ENCODE measurements at regions of chr5 and their contacts with region 1.

Region 1: DNA sequence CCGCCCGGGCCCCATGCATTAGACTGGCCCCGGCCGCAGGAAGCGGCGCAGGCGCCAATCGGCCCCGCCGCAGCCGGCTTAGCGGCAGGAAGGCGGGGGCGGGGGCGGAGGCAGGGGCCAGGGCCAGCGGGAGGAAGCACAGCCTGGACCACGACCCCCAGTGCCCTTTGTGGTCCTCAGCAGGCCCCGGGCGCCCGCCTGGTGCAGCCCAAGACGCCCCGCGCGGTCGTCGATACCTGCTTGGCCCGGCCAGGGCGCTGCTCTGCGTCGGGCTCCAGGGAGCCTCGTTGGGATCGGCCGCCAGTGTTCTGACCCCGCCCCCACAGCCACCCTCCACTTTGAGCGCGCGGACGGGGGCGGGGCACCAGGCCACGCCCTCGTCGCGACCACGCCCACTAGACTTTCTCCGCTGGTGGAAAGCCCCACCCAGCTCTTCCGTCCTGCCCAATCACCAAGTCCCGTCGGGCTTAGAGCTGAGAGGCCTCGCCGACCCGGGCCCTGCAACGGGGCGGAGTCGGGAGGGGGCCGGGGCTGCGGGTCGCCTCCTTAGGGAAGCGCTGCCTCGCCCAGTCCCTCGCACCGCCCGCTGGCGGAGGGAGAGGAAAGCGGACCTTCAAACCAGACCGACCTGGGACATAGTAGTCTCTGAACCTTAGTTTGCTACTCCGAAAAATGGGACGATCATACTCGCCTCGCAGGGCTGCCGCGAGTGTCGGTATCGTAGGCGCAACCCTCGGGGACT is at the start of gene PDLIM7:
- DNase-seq: no peak
- ATAC-seq: peak; percentile 89
- H3K4me3 ChIP-seq: peak within 1 kb of the TSS; percentile 56 to 63
- H3K27ac ChIP-seq: peak within 1 kb of the TSS; percentile 70
- H3K4me1 ChIP-seq: peaks cover 30% of the 10 kb centered on the region
- H3K27me3 ChIP-seq: no peaks in the 10 kb centered on the region
- CTCF ChIP-seq: peak; percentile 6; the same call in 1 of the 2 replicates
- total RNA-seq, gene PDLIM7: 62.9 TPM

Region 2: DNA sequence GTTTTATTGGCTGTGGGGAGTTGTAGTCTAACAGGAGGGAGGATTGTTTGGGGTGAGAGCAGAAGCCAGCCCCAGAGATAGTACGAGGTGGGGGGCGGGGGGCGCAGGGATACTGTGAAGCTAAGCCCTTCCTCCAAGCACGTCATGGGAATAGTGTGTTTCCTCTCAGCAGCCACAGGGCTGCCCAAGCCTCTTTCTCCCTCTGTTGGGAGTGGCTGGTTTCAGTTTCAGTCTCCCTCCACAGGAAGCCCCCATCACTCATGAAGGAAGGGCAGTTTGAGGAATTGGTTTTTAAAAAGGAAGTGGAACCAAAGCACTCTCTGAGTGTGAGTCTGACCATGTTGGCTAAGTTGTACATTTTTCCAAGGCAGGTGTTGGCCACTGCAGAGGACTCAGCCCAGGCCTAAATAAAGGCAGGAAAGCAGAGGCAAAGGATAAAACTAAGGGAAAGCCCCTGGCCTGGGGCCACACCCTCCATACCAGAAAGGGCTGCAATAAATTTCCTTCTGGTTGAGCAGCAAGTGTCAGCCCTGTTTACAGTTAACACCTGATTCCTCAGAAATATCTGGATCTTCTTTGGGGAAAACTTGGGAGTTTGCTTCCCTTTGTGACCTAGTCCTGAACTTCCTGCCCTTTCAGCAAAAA is 197.1 kb before region 1 on chr5:
- CTCF ChIA-PET with region 1: no interaction called
- POLR2A ChIA-PET with region 1: no interaction called
- in situ Hi-C with region 1: no loop called
- intact Hi-C with region 1: no loop called
- DNase-seq: no peak
- ATAC-seq: no peak
- H3K4me3 ChIP-seq: no peak overlapping the region
- H3K27ac ChIP-seq: peak overlapping the region; percentile 30; the same call in 1 of the 2 replicates
- H3K4me1 ChIP-seq: peaks cover 31% of the 10 kb centered on the region
- H3K27me3 ChIP-seq: no peaks in the 10 kb centered on the region
- CTCF ChIP-seq: no peak

Region 3: DNA sequence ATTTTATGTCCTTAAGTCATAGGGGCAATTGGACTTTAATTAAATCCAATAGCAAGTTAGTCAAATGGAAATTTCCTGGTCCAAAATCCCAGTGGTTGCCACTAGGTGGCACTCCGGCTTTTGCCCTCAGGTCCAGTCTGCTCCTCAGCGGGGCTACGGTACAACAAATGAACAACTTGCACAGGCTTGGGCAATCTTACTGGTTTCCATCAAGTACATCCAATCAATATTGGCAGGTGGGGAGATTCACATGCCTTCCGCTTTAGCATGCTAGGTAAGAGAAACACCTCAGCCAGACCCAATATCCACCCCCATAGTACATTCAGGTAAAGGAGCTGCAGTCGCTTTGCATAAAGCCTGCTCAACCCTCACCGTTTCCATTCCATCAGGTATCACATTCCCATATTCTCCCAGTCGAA is 179.5 kb before region 1 on chr5:
- CTCF ChIA-PET with region 1: no interaction called
- POLR2A ChIA-PET with region 1: no interaction called
- in situ Hi-C with region 1: no loop called
- intact Hi-C with region 1: no loop called
- DNase-seq: peak; percentile 65
- ATAC-seq: peak; percentile 81
- H3K4me3 ChIP-seq: no peak overlapping the region
- H3K27ac ChIP-seq: no peak overlapping the region
- H3K4me1 ChIP-seq: no peaks in the 10 kb centered on the region; the same call in 1 of the 2 replicates
- H3K27me3 ChIP-seq: no peaks in the 10 kb centered on the region
- CTCF ChIP-seq: peak; percentile 97

Region 4: DNA sequence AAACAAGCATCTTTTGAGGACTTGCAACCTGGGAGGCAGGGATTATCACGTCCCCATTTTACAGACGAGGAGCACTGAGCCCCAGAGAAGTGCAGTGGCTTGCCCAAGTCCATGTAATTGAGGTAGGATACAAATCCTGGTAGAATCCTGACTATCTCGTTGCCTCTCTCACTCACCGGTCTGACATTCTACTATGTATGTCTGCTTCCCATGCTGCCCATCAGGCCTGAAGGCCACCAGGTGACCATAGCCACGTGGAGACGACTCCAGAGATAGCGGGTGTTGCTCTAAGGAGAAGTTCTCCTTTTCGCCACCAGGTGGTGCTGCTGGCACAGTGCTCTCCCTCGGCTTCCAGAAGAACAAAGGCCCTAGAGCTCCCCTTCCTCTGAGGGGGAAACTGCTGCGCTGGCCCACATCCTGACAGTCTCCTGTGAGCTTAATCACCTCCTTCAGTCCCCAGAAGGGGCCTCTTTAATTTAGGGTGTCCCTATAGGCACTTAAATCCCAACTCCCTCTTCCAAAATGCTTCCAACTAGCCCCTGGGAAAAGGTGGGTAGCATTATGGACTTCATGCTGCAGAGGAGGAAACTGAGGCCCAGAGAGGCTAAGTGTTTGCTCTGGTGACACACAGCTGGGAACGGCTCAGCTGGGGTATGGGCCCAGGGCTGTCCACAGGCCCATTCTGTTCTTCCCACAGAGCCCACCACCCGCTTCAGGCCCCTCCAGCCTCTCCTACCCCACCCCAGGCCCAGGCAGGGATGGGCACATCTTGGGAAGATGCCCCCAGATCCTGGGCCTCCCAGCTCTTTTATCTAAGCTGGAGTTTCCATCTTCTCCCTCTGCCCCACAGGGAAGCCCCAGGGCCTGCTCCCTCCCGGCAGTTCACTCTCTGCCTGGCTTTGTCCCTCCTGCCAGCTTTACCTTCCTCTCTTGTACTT is 106.8 kb before region 1 on chr5:
- CTCF ChIA-PET with region 1: interaction called, 5 read pairs
- POLR2A ChIA-PET with region 1: no interaction called
- in situ Hi-C with region 1: no loop called
- intact Hi-C with region 1: loop called (anchors 5 kb)
- DNase-seq: no peak
- ATAC-seq: peak; percentile 92
- H3K4me3 ChIP-seq: no peak overlapping the region
- H3K27ac ChIP-seq: peak overlapping the region; percentile 60; the same call in 1 of the 2 replicates
- H3K4me1 ChIP-seq: peaks cover 3% of the 10 kb centered on the region; the same call in 1 of the 2 replicates
- H3K27me3 ChIP-seq: no peaks in the 10 kb centered on the region
- CTCF ChIP-seq: peak; percentile 97